ENCODE measurements at regions of chr7 and their contacts with region 1.

Region 1: GRCh38 chr7:77326696-77327628 is 89.2 kb downstream of the GSAP start:
- DNase-seq: peak in 1 of 2 donors; percentile 35
- ATAC-seq: peak in 1 of 3 donors; percentile 29
- H3K4me3 ChIP-seq: no peak overlapping the region
- H3K4me3 Mint-ChIP-seq: peak overlapping the region; percentile 91
- H3K27ac ChIP-seq: peak overlapping the region; percentile 58
- H3K27ac Mint-ChIP-seq: peak overlapping the region; percentile 97
- H3K4me1 ChIP-seq: peaks cover 53% of the 10 kb centered on the region
- H3K4me1 Mint-ChIP-seq: peaks cover 84 to 88% of the 10 kb centered on the region in 2 donors
- H3K27me3 ChIP-seq: no peaks in the 10 kb centered on the region
- H3K27me3 Mint-ChIP-seq: no peaks in the 10 kb centered on the region
- CTCF ChIP-seq: no peak

Region 2: DNA sequence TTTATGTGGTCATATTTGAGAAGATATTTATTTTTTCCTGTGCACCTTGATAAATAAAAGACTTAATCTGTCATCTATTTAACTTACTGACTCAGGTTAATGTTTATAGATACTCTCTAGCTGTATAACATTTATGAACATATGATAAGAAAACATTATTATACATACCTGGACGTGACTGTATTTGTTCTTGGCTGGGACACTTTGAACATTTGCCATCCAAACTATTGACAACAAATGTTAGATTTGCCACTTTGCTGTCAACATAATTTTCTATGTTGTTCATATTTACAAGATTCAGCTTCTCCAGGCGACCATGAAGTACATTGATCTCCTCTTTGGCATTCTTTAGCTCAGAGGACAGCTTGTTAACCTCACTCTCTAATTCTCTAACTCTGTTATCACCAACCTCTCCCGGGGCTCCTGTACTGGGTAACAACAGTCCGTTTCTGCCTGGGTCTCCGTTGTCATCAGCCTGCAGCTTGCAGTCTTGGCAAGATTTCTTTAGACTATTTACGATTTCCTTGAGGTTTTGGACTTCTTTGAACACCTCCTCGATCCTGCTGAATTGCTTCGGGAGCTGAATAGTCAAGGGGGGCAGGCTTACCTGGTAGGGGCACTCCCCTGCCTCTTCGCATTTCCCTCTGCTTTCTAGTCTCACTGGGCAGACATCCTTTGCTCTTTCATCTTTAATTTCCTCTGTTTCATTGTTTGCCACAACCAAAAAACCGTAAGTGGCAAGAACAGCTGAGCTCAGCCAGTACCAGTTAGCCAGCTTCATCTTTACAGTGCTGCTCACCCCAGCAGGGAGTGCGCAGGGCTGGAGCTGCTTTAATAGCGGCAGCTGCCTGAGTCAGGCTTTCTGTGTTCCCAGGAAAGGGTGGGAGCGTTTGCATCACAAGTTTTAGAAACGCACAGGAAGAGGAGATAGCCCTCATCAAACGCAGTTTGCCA is 127.7 kb before region 1 on chr7 and contains the start of gene FGL2:
- intact Hi-C with region 1: loop called (anchors 5 kb)
- DNase-seq: peak; percentile 31 to 68
- ATAC-seq: peak; percentile 74 to 84 (median 80)
- H3K4me3 ChIP-seq: peak within 1 kb of the TSS; percentile 48
- H3K4me3 Mint-ChIP-seq: peak within 1 kb of the TSS; percentile 99
- H3K27ac ChIP-seq: peak within 1 kb of the TSS; percentile 72
- H3K27ac Mint-ChIP-seq: peak within 1 kb of the TSS; percentile 98
- H3K4me1 ChIP-seq: peaks cover 11% of the 10 kb centered on the region
- H3K4me1 Mint-ChIP-seq: peaks cover 51 to 59% of the 10 kb centered on the region in 2 donors
- H3K27me3 ChIP-seq: no peaks in the 10 kb centered on the region
- H3K27me3 Mint-ChIP-seq: no peaks in the 10 kb centered on the region
- CTCF ChIP-seq: no peak
- total RNA-seq, gene FGL2: 38.4 to 51.5 (median 44.5) TPM

Region 3: DNA sequence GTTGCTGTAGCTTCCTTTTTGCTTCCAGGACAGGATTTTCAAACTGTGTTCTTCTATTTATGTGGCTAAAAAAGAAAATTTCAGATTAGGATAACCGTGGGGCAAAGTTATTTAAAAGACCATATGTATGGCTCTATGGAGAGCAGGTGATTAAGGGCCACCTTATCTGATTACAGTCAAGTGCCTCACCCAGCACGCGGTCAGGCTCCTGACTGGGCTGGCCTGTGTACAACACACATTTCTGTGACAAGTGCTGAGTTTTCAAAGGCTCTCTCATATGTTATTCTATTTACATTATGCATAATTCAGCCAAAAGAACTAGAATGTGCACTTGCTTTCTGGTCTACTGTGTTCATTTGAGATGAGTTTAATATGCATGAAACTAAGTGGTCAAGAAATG is 1019.0 kb after region 1 on chr7:
- intact Hi-C with region 1: no loop called
- DNase-seq: no peak
- ATAC-seq: no peak
- H3K4me3 ChIP-seq: no peak overlapping the region
- H3K4me3 Mint-ChIP-seq: no peak overlapping the region
- H3K27ac ChIP-seq: no peak overlapping the region
- H3K27ac Mint-ChIP-seq: no peak overlapping the region
- H3K4me1 ChIP-seq: no peaks in the 10 kb centered on the region
- H3K4me1 Mint-ChIP-seq: no peaks in the 10 kb centered on the region
- H3K27me3 ChIP-seq: no peaks in the 10 kb centered on the region
- H3K27me3 Mint-ChIP-seq: no peaks in the 10 kb centered on the region
- CTCF ChIP-seq: no peak